ENCODE measurements at regions of chr5 and their contacts with region 1.

Region 1: DNA sequence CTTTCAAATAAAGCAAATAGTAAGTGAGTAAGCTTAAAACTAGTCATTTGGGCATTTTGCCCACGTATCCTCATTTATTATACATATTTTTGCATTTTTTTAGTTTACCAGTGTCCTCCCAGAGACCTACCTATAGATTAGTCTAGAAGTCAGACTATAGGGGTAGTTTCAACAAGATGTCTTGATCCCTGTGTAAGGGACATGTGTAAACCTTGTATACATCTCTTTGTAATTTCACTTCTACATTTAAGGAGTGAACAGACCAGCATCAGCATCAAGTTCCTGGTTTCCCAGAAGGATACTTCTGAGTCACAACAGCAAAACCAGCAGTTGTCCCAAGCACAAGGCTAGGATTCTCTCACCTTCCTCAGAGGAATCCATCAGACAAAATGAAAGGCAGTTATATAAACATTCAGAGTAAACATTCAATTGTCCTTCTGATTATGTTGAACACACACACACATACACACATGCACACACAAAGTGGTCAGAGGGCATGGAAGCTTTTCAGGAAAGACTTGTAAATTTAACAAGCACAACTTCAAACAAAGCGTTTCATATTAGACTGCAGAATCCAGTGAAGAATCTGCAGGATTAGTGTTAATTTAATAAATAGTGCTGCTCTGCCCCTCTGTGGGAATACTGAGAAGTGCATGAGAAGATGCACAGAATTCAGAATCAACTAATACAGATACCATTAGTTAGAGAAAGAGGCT is 55.4 kb downstream of the HINT1 start:
- DNase-seq: peak in 8 of 14 experiments; percentile 5 to 67 (median 32)
- ATAC-seq: peak; percentile 79
- H3K4me3 ChIP-seq: no peak overlapping the region
- H3K4me3 Mint-ChIP-seq: no peak overlapping the region
- H3K27ac ChIP-seq: no peak overlapping the region
- H3K27ac Mint-ChIP-seq: no peak overlapping the region
- H3K4me1 ChIP-seq: no peaks in the 10 kb centered on the region
- H3K4me1 Mint-ChIP-seq: peaks cover 19% of the 10 kb centered on the region
- H3K27me3 ChIP-seq: no peaks in the 10 kb centered on the region
- H3K27me3 Mint-ChIP-seq: no peaks in the 10 kb centered on the region
- CTCF ChIP-seq: peak; percentile 91

Region 2: GRCh38 chr5:129664337-129664937 is 1445.3 kb before region 1 on chr5:
- CTCF ChIA-PET with region 1: no interaction called
- POLR2A ChIA-PET with region 1: no interaction called
- intact Hi-C with region 1: loop called (anchors 5 kb)
- DNase-seq: peak in 7 of 14 experiments; percentile 1 to 28 (median 15)
- ATAC-seq: no peak
- H3K4me3 ChIP-seq: no peak overlapping the region
- H3K4me3 Mint-ChIP-seq: no peak overlapping the region
- H3K27ac ChIP-seq: no peak overlapping the region
- H3K27ac Mint-ChIP-seq: no peak overlapping the region
- H3K4me1 ChIP-seq: no peaks in the 10 kb centered on the region
- H3K4me1 Mint-ChIP-seq: no peaks in the 10 kb centered on the region
- H3K27me3 ChIP-seq: no peaks in the 10 kb centered on the region
- H3K27me3 Mint-ChIP-seq: peaks cover 5% of the 10 kb centered on the region
- CTCF ChIP-seq: peak; percentile 60

Region 3: GRCh38 chr5:129767906-129768380 is 1341.8 kb before region 1 on chr5:
- CTCF ChIA-PET with region 1: interaction called, 7 read pairs
- POLR2A ChIA-PET with region 1: interaction called, 3 read pairs
- intact Hi-C with region 1: loop called (anchors 1 to 2 kb)
- DNase-seq: peak; percentile 1 to 79 (median 26)
- ATAC-seq: peak; percentile 82
- H3K4me3 ChIP-seq: no peak overlapping the region
- H3K4me3 Mint-ChIP-seq: no peak overlapping the region
- H3K27ac ChIP-seq: no peak overlapping the region
- H3K27ac Mint-ChIP-seq: no peak overlapping the region
- H3K4me1 ChIP-seq: peaks cover 2% of the 10 kb centered on the region
- H3K4me1 Mint-ChIP-seq: no peaks in the 10 kb centered on the region
- H3K27me3 ChIP-seq: no peaks in the 10 kb centered on the region
- H3K27me3 Mint-ChIP-seq: peaks cover 4% of the 10 kb centered on the region
- CTCF ChIP-seq: peak; percentile 94

Region 4: DNA sequence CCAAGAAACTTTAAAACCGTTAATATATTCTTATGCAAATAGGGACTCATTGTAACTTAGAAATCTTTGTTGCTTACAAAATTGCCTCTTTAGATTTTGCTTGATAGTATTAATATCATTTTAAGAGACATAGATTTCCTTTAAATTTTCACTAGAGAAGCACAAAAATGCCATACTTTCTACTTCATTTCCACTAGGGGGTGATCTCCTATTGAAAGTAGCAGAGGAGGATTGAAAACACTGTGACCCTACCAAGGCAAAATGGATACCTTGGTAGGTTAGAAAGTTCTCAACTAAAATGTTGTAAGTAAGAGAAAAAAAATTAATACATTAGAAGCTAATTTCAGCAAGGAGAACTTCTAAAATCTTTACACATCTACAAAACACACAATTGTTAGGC is 1000.5 kb before region 1 on chr5:
- CTCF ChIA-PET with region 1: no interaction called
- POLR2A ChIA-PET with region 1: no interaction called
- intact Hi-C with region 1: loop called (anchors 2 to 5 kb)
- DNase-seq: peak in 3 of 14 experiments; percentile 19 to 26 (median 19)
- ATAC-seq: no peak
- H3K4me3 ChIP-seq: no peak overlapping the region
- H3K4me3 Mint-ChIP-seq: no peak overlapping the region
- H3K27ac ChIP-seq: no peak overlapping the region
- H3K27ac Mint-ChIP-seq: no peak overlapping the region
- H3K4me1 ChIP-seq: no peaks in the 10 kb centered on the region
- H3K4me1 Mint-ChIP-seq: no peaks in the 10 kb centered on the region
- H3K27me3 ChIP-seq: no peaks in the 10 kb centered on the region
- H3K27me3 Mint-ChIP-seq: peaks cover 12% of the 10 kb centered on the region
- CTCF ChIP-seq: peak; percentile 45

Region 5: DNA sequence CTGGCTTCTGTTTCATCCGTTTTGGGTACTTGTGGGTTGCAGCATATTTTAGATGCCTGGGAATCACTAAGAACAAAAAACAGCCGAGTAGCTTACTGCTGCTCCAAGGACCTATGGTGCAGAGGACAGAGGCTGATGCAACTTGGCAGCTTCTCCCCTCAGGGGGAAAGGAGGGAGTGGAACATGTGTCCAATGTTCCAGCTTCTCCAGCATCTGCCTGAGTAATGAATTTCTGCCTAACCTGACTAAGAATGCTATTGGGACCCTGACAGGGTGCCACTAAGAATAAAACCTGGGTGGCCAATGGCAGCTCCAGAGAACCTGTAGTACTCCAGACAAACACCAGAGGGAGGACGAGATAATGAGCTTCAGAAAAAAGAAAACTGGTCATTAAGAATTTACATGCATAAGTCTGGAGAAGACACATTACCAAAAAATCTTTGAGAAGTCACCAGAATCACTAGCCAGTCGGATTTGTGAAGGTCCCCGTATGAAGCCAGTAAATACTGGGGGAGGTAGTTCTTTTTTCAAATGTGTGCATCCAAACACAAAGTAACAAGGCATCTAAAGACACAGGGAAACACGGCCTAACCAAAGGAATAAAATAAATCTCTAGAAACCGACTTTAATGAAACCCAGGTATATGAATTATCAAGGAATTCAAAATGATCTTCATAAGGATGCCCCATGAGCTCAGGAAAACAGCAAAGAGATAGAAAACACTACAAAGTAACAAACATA is 238.2 kb before region 1 on chr5:
- CTCF ChIA-PET with region 1: interaction called, 10 read pairs
- POLR2A ChIA-PET with region 1: interaction called, 9 read pairs
- intact Hi-C with region 1: loop called (anchors 1 kb)
- DNase-seq: peak in 13 of 14 experiments; percentile 5 to 73 (median 22)
- ATAC-seq: no peak
- H3K4me3 ChIP-seq: no peak overlapping the region
- H3K4me3 Mint-ChIP-seq: no peak overlapping the region
- H3K27ac ChIP-seq: no peak overlapping the region
- H3K27ac Mint-ChIP-seq: no peak overlapping the region
- H3K4me1 ChIP-seq: no peaks in the 10 kb centered on the region
- H3K4me1 Mint-ChIP-seq: no peaks in the 10 kb centered on the region
- H3K27me3 ChIP-seq: no peaks in the 10 kb centered on the region
- H3K27me3 Mint-ChIP-seq: no peaks in the 10 kb centered on the region
- CTCF ChIP-seq: peak; percentile 77

Region 6: GRCh38 chr5:131417240-131417869 is 307.7 kb after region 1 on chr5:
- CTCF ChIA-PET with region 1: no interaction called
- POLR2A ChIA-PET with region 1: no interaction called
- intact Hi-C with region 1: loop called (anchors 1 kb)
- DNase-seq: peak; percentile 73 to 93 (median 82)
- ATAC-seq: peak; percentile 30
- H3K4me3 ChIP-seq: no peak overlapping the region
- H3K4me3 Mint-ChIP-seq: peak overlapping the region; percentile 6
- H3K27ac ChIP-seq: no peak overlapping the region
- H3K27ac Mint-ChIP-seq: peak overlapping the region; percentile 70
- H3K4me1 ChIP-seq: peaks cover 18% of the 10 kb centered on the region
- H3K4me1 Mint-ChIP-seq: peaks cover 50% of the 10 kb centered on the region
- H3K27me3 ChIP-seq: no peaks in the 10 kb centered on the region
- H3K27me3 Mint-ChIP-seq: no peaks in the 10 kb centered on the region
- CTCF ChIP-seq: peak; percentile 92

Region 7: DNA sequence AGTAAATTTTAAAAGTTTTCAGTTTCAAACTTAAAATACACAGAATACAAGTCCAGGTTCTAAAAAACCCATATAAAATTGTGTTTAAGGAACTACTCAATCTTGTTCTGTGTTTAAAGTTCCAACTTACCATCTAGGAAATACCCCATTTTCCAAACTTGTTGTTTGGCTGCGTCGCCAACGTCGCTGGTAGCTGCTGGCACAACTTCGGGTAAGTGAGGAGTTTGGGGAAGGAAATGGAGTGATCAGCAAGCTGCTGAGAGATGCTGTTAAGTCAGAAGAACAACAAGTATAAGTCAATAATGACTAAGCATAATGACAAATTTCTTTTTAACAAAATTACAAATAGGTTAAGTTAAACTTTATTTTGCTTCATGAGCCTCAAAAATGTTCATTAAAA is 596.6 kb after region 1 on chr5:
- CTCF ChIA-PET with region 1: no interaction called
- POLR2A ChIA-PET with region 1: no interaction called
- intact Hi-C with region 1: no loop called
- DNase-seq: peak in 2 of 14 experiments; percentile 9 to 14
- ATAC-seq: no peak
- H3K4me3 ChIP-seq: no peak overlapping the region
- H3K4me3 Mint-ChIP-seq: no peak overlapping the region
- H3K27ac ChIP-seq: no peak overlapping the region
- H3K27ac Mint-ChIP-seq: no peak overlapping the region
- H3K4me1 ChIP-seq: no peaks in the 10 kb centered on the region
- H3K4me1 Mint-ChIP-seq: peaks cover 3% of the 10 kb centered on the region
- H3K27me3 ChIP-seq: no peaks in the 10 kb centered on the region
- H3K27me3 Mint-ChIP-seq: no peaks in the 10 kb centered on the region
- CTCF ChIP-seq: no peak